Activated CD4-positive, alpha-beta T cell treated with anti-CD3 and anti-CD28 coated beads for 36 hours (primary cell): ENCODE measurements at regions of chr2 and their contacts with region 1.

Region 1: DNA sequence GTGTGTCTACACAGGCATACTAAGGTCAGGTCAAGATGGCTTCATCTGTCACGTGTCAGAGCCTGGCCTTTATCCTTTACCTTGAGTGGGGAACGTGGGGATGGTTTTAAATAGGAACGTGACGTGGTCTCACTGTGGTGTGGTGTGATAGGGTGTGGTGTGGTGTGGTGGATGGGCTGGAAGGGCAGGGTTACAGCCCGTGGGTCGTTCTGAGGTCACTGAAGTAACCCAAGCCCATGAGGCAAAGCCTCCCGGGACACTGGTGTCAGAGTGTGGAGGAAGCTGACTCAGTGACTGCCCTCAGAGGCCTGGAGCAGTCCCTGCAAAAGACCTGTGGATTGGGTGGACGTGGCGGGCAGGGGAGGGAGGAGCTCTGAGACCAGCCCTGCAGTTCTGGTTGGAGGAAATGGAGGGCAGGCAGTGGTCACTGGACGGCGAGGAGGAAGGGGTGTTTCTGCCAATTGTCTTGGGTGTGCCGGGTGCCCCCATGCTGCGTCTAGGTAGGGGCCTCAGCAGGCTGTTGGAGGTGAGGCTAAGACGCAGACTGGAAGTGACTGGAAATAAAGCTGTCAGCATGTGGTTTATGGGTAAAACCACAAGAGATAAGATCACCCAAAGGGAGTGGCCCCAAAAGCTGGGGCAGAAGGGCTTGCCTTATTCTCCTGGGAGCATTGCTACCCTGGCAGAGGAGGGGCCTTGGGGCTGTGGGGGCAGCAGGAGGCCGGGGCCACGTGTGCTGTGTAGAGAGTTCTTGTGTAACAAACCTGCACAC is 84.8 kb downstream of the SH3RF3 start:
- DNase-seq: peak; percentile 73
- ATAC-seq: peak; percentile 71
- H3K4me3 Mint-ChIP-seq: peak overlapping the region; percentile 38
- H3K27ac Mint-ChIP-seq: peak overlapping the region; percentile 87
- H3K4me1 Mint-ChIP-seq: peaks cover 78% of the 10 kb centered on the region
- H3K27me3 Mint-ChIP-seq: peaks cover 65% of the 10 kb centered on the region

Region 2: GRCh38 chr2:109143214-109144187 is 70.3 kb before region 1 on chr2:
- CTCF ChIA-PET with region 1: no interaction called
- POLR2A ChIA-PET with region 1: no interaction called
- intact Hi-C with region 1: loop called (anchors 1 kb)
- DNase-seq: peak; percentile 87
- ATAC-seq: peak; percentile 91
- H3K4me3 Mint-ChIP-seq: peak overlapping the region; percentile 18
- H3K27ac Mint-ChIP-seq: peak overlapping the region; percentile 53
- H3K4me1 Mint-ChIP-seq: peaks cover 49% of the 10 kb centered on the region
- H3K27me3 Mint-ChIP-seq: peaks cover 22% of the 10 kb centered on the region

Region 3: DNA sequence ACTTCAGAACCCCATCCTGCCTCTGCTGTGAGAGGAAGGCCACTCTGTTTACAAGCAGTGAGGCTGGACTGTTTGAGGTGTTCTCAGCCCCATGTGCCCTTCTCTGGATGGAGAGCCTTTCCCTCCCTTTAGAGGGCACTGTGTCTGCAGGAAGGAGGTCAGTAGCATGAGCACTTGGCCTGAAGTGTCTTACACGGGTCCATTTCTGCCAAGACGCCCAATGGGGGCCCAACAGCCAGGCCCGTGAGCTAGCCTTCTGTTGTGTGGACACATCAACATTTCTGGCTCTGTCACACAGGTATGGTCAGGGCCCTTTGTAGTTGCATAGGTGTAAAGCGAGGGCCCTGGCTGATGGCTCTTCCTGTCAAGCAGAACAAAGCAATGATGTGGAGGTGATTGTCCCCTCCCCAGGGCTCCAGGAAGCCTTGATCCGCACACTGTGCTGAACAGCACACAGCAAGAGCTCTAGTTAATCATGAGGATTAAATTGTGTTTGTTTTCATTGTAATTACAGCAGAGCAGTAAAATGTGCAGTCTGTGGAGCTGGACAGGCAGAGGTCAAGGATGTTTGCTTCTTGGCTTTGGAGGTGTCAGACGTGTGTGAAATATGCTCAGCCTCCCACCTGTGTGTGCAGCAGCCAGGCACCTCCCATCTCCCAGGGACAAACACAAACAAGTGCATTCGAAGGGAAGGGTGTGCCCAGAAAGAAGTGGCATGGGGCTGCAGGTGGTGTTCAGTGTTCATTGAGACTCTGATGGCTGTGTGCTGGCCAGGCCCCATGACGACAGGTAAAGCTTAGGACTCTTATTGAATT is 47.3 kb after region 1 on chr2:
- CTCF ChIA-PET with region 1: no interaction called
- POLR2A ChIA-PET with region 1: no interaction called
- intact Hi-C with region 1: no loop called
- DNase-seq: no peak
- ATAC-seq: peak; percentile 47
- H3K4me3 Mint-ChIP-seq: no peak overlapping the region
- H3K27ac Mint-ChIP-seq: no peak overlapping the region
- H3K4me1 Mint-ChIP-seq: no peaks in the 10 kb centered on the region
- H3K27me3 Mint-ChIP-seq: no peaks in the 10 kb centered on the region

Region 4: GRCh38 chr2:109402180-109402579 is 188.3 kb after region 1 on chr2:
- CTCF ChIA-PET with region 1: interaction called, 3 read pairs
- POLR2A ChIA-PET with region 1: no interaction called
- intact Hi-C with region 1: loop called in 1 of 2 experiments (anchors 1 kb)
- DNase-seq: no peak
- ATAC-seq: no peak
- H3K4me3 Mint-ChIP-seq: no peak overlapping the region
- H3K27ac Mint-ChIP-seq: no peak overlapping the region
- H3K4me1 Mint-ChIP-seq: peaks cover 26% of the 10 kb centered on the region
- H3K27me3 Mint-ChIP-seq: no peaks in the 10 kb centered on the region

Region 5: DNA sequence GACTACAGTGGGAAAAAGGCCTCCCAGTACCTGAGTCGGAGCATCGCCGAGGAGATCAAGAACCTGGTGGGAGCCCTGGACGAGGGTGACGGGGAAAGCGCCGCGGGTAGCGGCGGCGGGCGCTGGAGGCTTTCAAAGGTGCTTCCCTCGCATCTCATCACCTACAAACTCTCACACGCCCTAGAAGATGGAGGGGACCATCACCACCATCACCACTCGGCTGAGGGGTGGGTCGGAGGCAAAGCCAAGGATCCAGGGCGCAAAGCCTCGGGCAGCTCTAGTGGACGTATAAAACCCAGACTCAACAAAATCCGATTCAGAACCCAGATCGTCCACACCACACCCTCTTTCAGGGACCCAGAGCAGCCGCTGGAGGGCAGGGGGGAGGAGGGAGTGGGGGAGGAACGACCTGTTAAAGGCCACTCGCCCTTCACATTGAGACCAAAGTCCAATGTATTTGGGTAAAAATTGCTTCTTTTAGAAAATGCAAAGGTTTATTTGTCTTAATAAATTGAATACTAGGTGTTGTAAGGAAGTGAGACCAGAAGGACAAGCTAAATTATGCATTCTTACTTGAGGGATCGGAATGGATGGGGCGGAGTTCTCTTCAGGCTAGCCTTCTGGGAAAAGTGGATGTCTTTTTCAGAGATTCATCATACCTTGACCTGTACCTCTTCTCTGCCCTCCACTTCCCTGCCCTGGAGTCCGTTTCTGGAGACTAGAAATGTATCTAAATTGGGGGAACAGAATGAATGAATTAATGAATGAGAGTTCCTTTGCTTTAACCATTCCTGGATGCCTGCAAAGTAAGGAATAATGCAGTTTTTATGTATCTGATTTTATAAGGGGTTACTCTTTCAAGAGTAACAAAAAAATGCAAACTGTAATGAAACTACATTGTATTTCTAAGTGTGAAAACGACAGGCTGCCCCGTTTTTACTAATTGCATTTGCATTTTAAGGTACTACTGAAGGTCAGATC is 402.1 kb after region 1 on chr2:
- CTCF ChIA-PET with region 1: no interaction called
- POLR2A ChIA-PET with region 1: no interaction called
- intact Hi-C with region 1: no loop called
- DNase-seq: no peak
- ATAC-seq: no peak
- H3K4me3 Mint-ChIP-seq: peak overlapping the region; percentile 8
- H3K27ac Mint-ChIP-seq: no peak overlapping the region
- H3K4me1 Mint-ChIP-seq: peaks cover 9% of the 10 kb centered on the region
- H3K27me3 Mint-ChIP-seq: peaks cover 46% of the 10 kb centered on the region